Activated CD4-positive, alpha-beta memory T cell treated with anti-CD3 and anti-CD28 coated beads, Interleukin-2, amount 10 ng/mL, durations not matched to agents 7 days and 5 days (primary cell): ENCODE measurements at regions of chr19 and their contacts with region 1.

Region 1: GRCh38 chr19:4815426-4816201 is 15.9 kb downstream of the TICAM1 start:
- DNase-seq: peak; percentile 77
- H3K4me3 Mint-ChIP-seq: peak overlapping the region; percentile 44
- H3K27ac Mint-ChIP-seq: peak overlapping the region; percentile 70
- H3K4me1 Mint-ChIP-seq: peaks cover 33% of the 10 kb centered on the region
- H3K27me3 Mint-ChIP-seq: no peaks in the 10 kb centered on the region

Region 2: DNA sequence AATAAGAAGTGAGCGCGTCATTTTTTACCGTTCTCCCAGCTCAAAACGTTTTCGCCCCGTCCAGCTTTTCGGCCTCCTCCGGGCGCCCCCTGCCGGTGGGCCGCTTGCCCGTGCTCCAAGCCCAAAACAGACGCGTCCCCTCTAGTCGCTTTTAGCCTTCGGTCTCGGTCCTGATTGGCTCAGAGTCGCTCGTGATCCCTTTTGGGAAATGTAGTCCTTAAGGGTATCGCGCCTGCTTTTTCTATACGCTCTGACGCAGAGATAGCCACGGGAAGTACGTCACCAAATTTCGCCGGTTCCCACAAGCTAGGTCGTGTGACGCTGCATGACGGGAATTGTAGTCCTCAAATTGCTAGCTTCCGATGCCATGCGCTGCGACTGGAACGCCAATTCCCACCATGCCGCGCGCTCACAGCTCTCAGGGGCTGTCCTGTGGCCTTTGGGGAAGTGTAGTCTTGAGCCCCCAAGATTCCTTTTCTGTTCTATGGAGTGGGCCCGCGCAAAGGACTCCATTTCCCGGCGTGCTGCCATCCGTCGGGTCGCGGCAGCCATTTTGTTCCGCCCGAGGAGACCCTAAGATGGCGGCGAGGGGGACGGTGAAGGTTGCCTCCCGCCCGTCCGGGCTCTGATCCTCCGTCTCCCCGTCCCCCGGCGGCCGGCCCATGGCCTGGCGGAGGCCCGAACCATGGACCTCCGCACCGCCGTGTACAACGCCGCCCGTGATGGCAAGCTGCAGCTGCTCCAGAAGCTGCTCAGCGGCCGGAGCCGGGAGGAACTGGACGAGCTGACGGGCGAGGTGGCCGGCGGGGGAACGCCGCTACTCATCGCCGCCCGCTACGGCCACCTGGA is 24.2 kb before region 1 on chr19 and contains the start of gene FEM1A:
- CTCF ChIA-PET with region 1: interaction called, 32 read pairs
- POLR2A ChIA-PET with region 1: interaction called, 3 read pairs
- DNase-seq: peak; percentile 99
- H3K4me3 Mint-ChIP-seq: peak within 1 kb of the TSS; percentile 80
- H3K27ac Mint-ChIP-seq: peak within 1 kb of the TSS; percentile 86
- H3K4me1 Mint-ChIP-seq: peaks cover 38% of the 10 kb centered on the region
- H3K27me3 Mint-ChIP-seq: no peaks in the 10 kb centered on the region
- total RNA-seq, gene FEM1A: 10.2 to 10.3 TPM

Region 3: GRCh38 chr19:4831304-4831978 is 15.8 kb after region 1 on chr19 and contains the start of gene TICAM1:
- CTCF ChIA-PET with region 1: interaction called, 68 read pairs
- POLR2A ChIA-PET with region 1: interaction called, 6 read pairs
- DNase-seq: peak; percentile 77
- H3K4me3 Mint-ChIP-seq: peak within 1 kb of the TSS; percentile 94
- H3K27ac Mint-ChIP-seq: peak within 1 kb of the TSS; percentile 90
- H3K4me1 Mint-ChIP-seq: peaks cover 28% of the 10 kb centered on the region
- H3K27me3 Mint-ChIP-seq: no peaks in the 10 kb centered on the region
- total RNA-seq, gene TICAM1: 25.9 to 26.0 TPM

Region 4: GRCh38 chr19:4851551-4852290 is 36.1 kb after region 1 on chr19:
- CTCF ChIA-PET with region 1: interaction called, 264 read pairs
- POLR2A ChIA-PET with region 1: no interaction called
- DNase-seq: peak; percentile 73
- H3K4me3 Mint-ChIP-seq: no peak overlapping the region
- H3K27ac Mint-ChIP-seq: no peak overlapping the region
- H3K4me1 Mint-ChIP-seq: peaks cover 2% of the 10 kb centered on the region
- H3K27me3 Mint-ChIP-seq: no peaks in the 10 kb centered on the region

Region 5: DNA sequence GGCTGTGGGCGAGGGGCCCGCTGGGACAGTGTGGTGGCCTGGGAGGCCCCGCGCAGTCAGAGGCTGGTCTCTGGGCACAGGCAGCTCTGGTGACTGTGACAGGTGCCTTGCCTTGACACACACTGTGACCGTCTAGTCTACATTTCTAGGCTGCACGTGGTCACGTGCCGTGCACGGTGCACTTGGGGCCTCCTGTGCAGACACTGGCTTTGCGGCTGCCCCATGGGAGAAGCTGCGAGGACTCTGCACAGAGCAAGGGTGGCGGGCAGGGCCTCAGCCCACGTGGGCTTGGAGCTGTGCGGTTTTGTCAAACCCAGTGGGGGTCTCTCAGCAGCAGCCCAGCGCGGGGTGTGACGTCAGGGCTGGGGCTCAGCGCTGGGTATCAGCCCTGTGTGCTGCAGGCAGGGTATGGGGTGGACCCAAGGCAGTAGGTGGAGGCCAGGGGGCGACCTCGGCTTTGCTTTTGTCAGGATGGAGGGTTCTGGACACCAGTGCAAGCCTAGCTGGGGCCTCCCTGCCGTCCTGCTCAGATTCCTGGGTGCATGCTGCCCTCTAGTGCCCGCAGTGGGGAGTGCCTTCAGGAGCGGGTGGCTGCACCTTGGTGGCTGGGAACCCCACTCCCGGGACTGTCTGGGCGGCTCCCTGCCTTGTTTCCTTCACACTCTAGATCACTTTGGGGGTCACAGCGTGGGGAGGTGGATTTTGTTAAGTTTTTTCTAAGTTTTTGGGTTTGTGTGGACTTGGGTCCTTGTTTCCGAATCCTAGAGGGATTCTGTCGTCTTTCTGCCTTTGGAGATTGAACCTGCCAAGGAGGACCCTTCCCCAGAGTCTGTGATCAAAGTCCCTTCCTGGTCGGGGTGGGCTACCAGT is 215.9 kb after region 1 on chr19:
- CTCF ChIA-PET with region 1: interaction called, 45 read pairs
- POLR2A ChIA-PET with region 1: no interaction called
- DNase-seq: peak; percentile 83
- H3K4me3 Mint-ChIP-seq: no peak overlapping the region
- H3K27ac Mint-ChIP-seq: no peak overlapping the region
- H3K4me1 Mint-ChIP-seq: no peaks in the 10 kb centered on the region
- H3K27me3 Mint-ChIP-seq: no peaks in the 10 kb centered on the region